HepG2 (cell line): ENCODE measurements at regions of chr2 and their contacts with region 1.

Region 1: DNA sequence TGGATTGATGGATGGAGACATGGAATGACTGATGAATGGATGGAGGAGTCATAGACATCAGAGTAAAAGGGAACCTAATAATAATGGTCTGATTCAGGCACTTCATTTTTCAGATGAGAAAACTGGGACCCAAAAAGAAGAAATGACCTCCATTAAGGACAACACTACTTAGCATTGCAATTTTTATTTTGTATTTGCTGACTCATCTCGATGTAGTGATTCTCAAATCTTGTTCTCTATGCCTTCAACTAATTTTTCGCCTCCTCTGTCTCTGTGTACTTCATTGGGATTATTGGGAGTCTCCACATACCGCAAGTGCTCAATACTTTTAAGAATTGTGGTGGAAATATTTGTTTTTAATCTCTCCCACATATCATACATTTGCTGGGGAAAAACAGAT is 446.2 kb upstream of the FSHR start:
- DNase-seq: no peak
- ATAC-seq: no peak
- H3K4me3 ChIP-seq: no peak overlapping the region
- H3K27ac ChIP-seq: no peak overlapping the region
- H3K4me1 ChIP-seq: no peaks in the 10 kb centered on the region
- H3K27me3 ChIP-seq: no peaks in the 10 kb centered on the region
- CTCF ChIP-seq: no peak
- EP300 ChIP-seq: no peak
- POLR2A ChIP-seq: no peak
- RAD21 ChIP-seq: no peak

Region 2: GRCh38 chr2:49582946-49583345 is 17.6 kb before region 1 on chr2:
- CTCF ChIA-PET with region 1: no interaction called
- POLR2A ChIA-PET with region 1: no interaction called
- in situ Hi-C with region 1: no loop called
- intact Hi-C with region 1: no loop called
- DNase-seq: no peak
- ATAC-seq: no peak
- H3K4me3 ChIP-seq: no peak overlapping the region
- H3K27ac ChIP-seq: no peak overlapping the region
- H3K4me1 ChIP-seq: no peaks in the 10 kb centered on the region
- H3K27me3 ChIP-seq: no peaks in the 10 kb centered on the region; a peak in 1 of 5 replicates
- CTCF ChIP-seq: no peak
- EP300 ChIP-seq: no peak
- POLR2A ChIP-seq: no peak
- RAD21 ChIP-seq: no peak

Region 3: GRCh38 chr2:50207881-50208280 is 607.4 kb after region 1 on chr2:
- CTCF ChIA-PET with region 1: no interaction called
- POLR2A ChIA-PET with region 1: no interaction called
- in situ Hi-C with region 1: no loop called
- intact Hi-C with region 1: no loop called
- DNase-seq: no peak
- ATAC-seq: no peak
- H3K4me3 ChIP-seq: no peak overlapping the region
- H3K27ac ChIP-seq: no peak overlapping the region
- H3K4me1 ChIP-seq: no peaks in the 10 kb centered on the region
- H3K27me3 ChIP-seq: no peaks in the 10 kb centered on the region; a peak in 1 of 5 replicates
- CTCF ChIP-seq: no peak
- EP300 ChIP-seq: no peak
- POLR2A ChIP-seq: no peak
- RAD21 ChIP-seq: no peak

Region 4: GRCh38 chr2:50284188-50284587 is 683.7 kb after region 1 on chr2:
- CTCF ChIA-PET with region 1: no interaction called
- POLR2A ChIA-PET with region 1: no interaction called
- in situ Hi-C with region 1: no loop called
- intact Hi-C with region 1: loop called (anchors 10 kb)
- DNase-seq: no peak
- ATAC-seq: no peak
- H3K4me3 ChIP-seq: no peak overlapping the region
- H3K27ac ChIP-seq: no peak overlapping the region
- H3K4me1 ChIP-seq: no peaks in the 10 kb centered on the region
- H3K27me3 ChIP-seq: no peaks in the 10 kb centered on the region
- CTCF ChIP-seq: no peak
- EP300 ChIP-seq: no peak
- POLR2A ChIP-seq: no peak
- RAD21 ChIP-seq: no peak